CD4-positive, alpha-beta T cell (primary cell): ENCODE measurements at regions of chr15 and their contacts with region 1.

Region 1: GRCh38 chr15:88904624-88905327 is 8.4 kb downstream of the MFGE8 start:
- DNase-seq: peak; percentile 94 to 98 (median 96)
- ATAC-seq: peak; percentile 98
- H3K4me3 ChIP-seq: no peak overlapping the region
- H3K4me3 Mint-ChIP-seq: peak overlapping the region; percentile 17
- H3K27ac ChIP-seq: peak overlapping the region; percentile 67 to 76
- H3K27ac Mint-ChIP-seq: peak overlapping the region; percentile 93
- H3K4me1 ChIP-seq: peaks cover 43% of the 10 kb centered on the region
- H3K4me1 Mint-ChIP-seq: peaks cover 50% of the 10 kb centered on the region
- H3K27me3 ChIP-seq: no peaks in the 10 kb centered on the region
- H3K27me3 Mint-ChIP-seq: no peaks in the 10 kb centered on the region
- CTCF ChIP-seq: peak; percentile 96

Region 2: GRCh38 chr15:88546248-88547129 is 358.3 kb before region 1 on chr15 and contains the start of gene DET1:
- CTCF ChIA-PET with region 1: no interaction called
- POLR2A ChIA-PET with region 1: no interaction called
- intact Hi-C with region 1: loop called in 1 of 2 experiments (anchors 10 kb)
- DNase-seq: peak; percentile 90 to 98 (median 94)
- ATAC-seq: peak; percentile 91
- H3K4me3 ChIP-seq: peak within 1 kb of the TSS; percentile 66
- H3K4me3 Mint-ChIP-seq: peak within 1 kb of the TSS; percentile 91
- H3K27ac ChIP-seq: peak within 1 kb of the TSS; percentile 64 to 74
- H3K27ac Mint-ChIP-seq: peak within 1 kb of the TSS; percentile 95
- H3K4me1 ChIP-seq: peaks cover 10% of the 10 kb centered on the region
- H3K4me1 Mint-ChIP-seq: peaks cover 19% of the 10 kb centered on the region
- H3K27me3 ChIP-seq: no peaks in the 10 kb centered on the region
- H3K27me3 Mint-ChIP-seq: no peaks in the 10 kb centered on the region
- CTCF ChIP-seq: peak; percentile 74
- total RNA-seq, gene DET1: 2.2 to 2.8 TPM

Region 3: DNA sequence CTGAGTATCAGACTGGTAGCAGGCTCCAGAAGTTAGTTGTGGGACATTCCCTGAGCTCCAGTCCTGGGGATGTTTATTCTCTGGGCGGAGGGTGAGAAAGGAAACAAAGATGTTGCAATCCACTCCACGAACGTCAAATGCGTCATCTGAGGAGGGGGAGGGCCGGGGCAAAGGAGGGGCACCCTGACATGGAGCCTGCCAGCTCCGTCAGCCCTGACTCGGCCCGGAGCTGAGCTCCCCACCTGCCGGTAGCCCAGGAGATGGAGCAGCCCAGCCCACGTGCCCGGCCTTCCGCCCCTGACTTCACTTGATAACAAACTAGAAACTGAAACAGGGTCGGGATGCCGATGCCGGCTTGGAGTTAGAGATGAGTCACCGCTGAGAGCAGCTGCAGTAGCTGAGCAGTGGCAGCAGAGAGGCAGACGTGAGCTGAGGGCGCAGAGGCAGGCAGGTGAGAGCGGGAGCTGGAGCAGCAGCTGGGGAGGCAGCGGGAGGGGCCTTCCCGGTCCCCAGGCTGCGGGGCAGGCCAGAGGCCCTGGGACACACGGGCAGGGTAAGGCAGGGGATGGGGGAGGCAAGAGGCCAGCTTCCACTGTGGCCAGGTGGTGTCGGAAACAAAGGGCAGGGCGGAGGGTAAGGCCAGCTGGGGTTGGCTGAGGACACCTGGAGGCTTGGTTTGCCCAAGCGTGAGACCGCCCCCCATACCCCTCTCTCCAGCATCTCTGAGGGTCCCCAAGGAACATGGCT is 266.0 kb before region 1 on chr15 and contains the start of gene ISG20:
- CTCF ChIA-PET with region 1: interaction called, 10 read pairs
- POLR2A ChIA-PET with region 1: interaction called, 10 read pairs
- intact Hi-C with region 1: no loop called
- DNase-seq: peak; percentile 93 to 100 (median 96)
- ATAC-seq: peak; percentile 77
- H3K4me3 ChIP-seq: peak within 1 kb of the TSS; percentile 76
- H3K4me3 Mint-ChIP-seq: peak within 1 kb of the TSS; percentile 92
- H3K27ac ChIP-seq: peak within 1 kb of the TSS; percentile 99 to 100
- H3K27ac Mint-ChIP-seq: peak within 1 kb of the TSS; percentile 95
- H3K4me1 ChIP-seq: peaks cover 96% of the 10 kb centered on the region
- H3K4me1 Mint-ChIP-seq: peaks cover 77% of the 10 kb centered on the region
- H3K27me3 ChIP-seq: no peaks in the 10 kb centered on the region
- H3K27me3 Mint-ChIP-seq: no peaks in the 10 kb centered on the region
- CTCF ChIP-seq: peak; percentile 65
- total RNA-seq, gene ISG20: 152 to 157 TPM

Region 4: DNA sequence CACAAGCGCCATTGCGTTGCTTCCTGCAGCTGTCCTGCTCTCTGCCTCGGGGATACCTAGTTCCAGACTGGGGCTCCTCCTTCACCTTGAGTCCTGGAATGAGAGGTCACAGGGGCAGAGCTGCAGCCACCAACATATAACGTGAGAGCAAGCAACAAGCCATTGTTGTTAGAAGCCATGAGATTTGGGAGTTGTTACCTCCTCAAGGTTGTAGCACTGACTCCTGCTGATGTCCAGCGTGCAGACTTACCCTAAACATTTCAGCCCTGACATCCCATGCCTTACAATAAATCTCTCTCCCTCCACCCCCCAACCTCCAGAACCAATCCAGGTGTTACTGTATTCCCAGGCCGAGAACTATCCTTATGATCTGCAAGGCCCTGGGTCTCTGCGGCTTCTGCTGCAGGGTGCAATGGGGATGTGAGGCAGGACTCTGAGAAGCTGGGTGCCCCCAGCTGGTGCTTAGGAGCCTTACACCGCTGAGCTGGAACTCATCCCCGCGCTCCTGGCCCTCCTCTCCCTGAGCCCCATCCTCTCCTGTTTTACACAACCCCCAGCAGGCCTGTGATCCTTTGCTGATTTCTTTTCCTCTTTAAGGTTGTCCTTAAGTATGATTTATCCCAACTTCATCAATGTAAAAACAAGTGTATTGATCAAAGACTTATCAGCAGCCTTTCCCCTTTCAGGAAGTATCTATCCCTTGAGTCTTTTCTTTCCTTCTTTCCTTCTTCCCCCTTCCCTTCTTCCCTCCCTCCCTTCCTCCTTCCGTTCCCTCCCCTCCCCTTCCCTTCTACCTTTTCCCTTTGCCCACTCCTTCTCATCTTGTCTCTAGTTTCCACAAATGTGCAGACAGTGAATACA is 99.3 kb after region 1 on chr15:
- CTCF ChIA-PET with region 1: interaction called, 7 read pairs
- POLR2A ChIA-PET with region 1: interaction called, 10 read pairs
- intact Hi-C with region 1: no loop called
- DNase-seq: peak in 3 of 14 experiments; percentile 15 to 29 (median 23)
- ATAC-seq: no peak
- H3K4me3 ChIP-seq: no peak overlapping the region
- H3K4me3 Mint-ChIP-seq: no peak overlapping the region
- H3K27ac ChIP-seq: no peak overlapping the region
- H3K27ac Mint-ChIP-seq: no peak overlapping the region
- H3K4me1 ChIP-seq: no peaks in the 10 kb centered on the region
- H3K4me1 Mint-ChIP-seq: no peaks in the 10 kb centered on the region
- H3K27me3 ChIP-seq: no peaks in the 10 kb centered on the region
- H3K27me3 Mint-ChIP-seq: peaks cover 9% of the 10 kb centered on the region
- CTCF ChIP-seq: no peak

Region 5: DNA sequence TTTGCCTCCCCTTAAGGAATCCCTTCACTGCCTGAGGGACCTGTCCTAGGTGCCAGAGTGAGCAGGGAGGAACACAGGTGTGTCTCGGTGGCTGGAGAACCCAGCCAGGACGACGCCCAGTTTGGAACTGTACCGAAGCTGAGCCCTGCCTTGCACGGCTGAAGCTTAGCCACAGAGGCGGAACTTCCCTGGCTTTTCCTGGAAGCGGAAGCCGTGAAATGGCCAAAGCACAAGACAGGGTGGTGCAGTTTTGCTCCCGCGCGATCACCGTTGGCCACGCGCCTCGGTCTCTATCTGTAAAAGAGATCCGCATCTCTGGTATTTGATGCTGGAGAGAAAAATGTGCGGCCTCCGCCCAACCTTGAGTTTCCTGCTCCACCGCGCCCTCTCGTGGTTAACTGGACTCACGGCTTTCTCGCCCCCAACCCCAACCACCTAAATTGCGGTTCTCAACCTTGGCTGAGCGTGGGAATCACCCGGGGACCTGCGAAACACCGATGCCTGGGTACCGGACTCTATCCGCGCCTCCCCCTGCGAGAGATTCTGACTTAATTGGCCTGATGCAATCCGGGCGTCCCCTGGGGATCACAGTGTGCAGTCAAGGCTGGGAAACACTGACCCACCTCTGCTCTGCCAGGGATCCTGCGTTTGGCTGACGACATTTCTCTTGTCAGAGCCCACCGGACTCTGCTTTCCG is 112.7 kb after region 1 on chr15:
- CTCF ChIA-PET with region 1: interaction called, 58 read pairs
- POLR2A ChIA-PET with region 1: interaction called, 15 read pairs
- intact Hi-C with region 1: loop called (anchors 1 kb)
- DNase-seq: peak; percentile 80 to 95 (median 85)
- ATAC-seq: peak; percentile 95
- H3K4me3 ChIP-seq: peak overlapping the region; percentile 36
- H3K4me3 Mint-ChIP-seq: peak overlapping the region; percentile 20
- H3K27ac ChIP-seq: no peak overlapping the region
- H3K27ac Mint-ChIP-seq: peak overlapping the region; percentile 22
- H3K4me1 ChIP-seq: peaks cover 17% of the 10 kb centered on the region
- H3K4me1 Mint-ChIP-seq: peaks cover 13% of the 10 kb centered on the region
- H3K27me3 ChIP-seq: peaks cover 0 to 2% of the 10 kb centered on the region in 2 experiments
- H3K27me3 Mint-ChIP-seq: peaks cover 14% of the 10 kb centered on the region
- CTCF ChIP-seq: peak; percentile 85

Region 6: DNA sequence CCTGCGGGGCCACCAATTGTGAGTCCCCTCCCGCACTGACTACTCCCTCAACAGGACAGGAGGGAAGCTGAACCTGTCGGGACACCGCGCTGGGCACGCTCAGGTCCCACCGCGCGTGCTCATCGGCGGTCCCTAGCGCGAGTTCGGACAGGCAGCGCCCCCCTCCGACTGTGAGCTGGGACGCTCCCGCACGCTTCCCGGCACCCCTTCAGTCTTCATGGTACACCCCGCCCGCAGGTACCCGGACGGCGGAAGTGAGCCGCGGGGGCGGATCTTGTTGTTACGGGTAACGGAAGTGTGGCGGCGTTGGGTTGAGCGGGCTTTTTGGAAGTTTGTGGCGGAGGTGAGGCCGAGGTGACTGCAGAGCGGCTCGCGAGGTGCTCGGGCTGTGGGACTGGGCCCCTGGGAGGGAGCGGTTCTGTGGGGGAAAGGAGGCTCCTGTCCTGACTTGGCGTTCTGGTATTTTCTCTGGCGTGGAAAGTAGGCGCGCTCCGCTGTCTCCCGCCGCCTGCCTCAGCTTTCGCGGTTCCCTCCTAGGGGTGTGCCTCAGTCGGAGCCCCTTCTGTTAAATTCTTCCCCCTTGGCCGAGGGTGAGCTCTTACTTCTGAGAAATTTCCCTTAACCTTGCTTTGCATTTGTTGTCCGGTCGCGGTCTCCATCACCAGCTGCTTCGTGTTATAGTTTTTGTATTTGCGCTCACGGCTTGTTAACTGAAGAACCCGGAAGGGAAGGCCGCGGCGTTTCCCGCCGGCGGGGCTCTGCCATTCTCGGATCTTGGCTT is 339.1 kb after region 1 on chr15 and contains the start of gene FANCI:
- CTCF ChIA-PET with region 1: interaction called, 3 read pairs
- POLR2A ChIA-PET with region 1: no interaction called
- intact Hi-C with region 1: loop called in 1 of 2 experiments (anchors 5 kb)
- DNase-seq: peak; percentile 92 to 99 (median 96)
- ATAC-seq: peak; percentile 98
- H3K4me3 ChIP-seq: peak within 1 kb of the TSS; percentile 84
- H3K4me3 Mint-ChIP-seq: peak within 1 kb of the TSS; percentile 92
- H3K27ac ChIP-seq: no peak within 1 kb of the TSS
- H3K27ac Mint-ChIP-seq: peak within 1 kb of the TSS; percentile 83
- H3K4me1 ChIP-seq: peaks cover 26% of the 10 kb centered on the region
- H3K4me1 Mint-ChIP-seq: peaks cover 37% of the 10 kb centered on the region
- H3K27me3 ChIP-seq: no peaks in the 10 kb centered on the region
- H3K27me3 Mint-ChIP-seq: no peaks in the 10 kb centered on the region
- CTCF ChIP-seq: no peak
- total RNA-seq, gene FANCI: 6.1 to 7.1 TPM